Dorsolateral prefrontal cortex (tissue), 120 donors: ENCODE measurements at regions of chr11 and their contacts with region 1.

Region 1: DNA sequence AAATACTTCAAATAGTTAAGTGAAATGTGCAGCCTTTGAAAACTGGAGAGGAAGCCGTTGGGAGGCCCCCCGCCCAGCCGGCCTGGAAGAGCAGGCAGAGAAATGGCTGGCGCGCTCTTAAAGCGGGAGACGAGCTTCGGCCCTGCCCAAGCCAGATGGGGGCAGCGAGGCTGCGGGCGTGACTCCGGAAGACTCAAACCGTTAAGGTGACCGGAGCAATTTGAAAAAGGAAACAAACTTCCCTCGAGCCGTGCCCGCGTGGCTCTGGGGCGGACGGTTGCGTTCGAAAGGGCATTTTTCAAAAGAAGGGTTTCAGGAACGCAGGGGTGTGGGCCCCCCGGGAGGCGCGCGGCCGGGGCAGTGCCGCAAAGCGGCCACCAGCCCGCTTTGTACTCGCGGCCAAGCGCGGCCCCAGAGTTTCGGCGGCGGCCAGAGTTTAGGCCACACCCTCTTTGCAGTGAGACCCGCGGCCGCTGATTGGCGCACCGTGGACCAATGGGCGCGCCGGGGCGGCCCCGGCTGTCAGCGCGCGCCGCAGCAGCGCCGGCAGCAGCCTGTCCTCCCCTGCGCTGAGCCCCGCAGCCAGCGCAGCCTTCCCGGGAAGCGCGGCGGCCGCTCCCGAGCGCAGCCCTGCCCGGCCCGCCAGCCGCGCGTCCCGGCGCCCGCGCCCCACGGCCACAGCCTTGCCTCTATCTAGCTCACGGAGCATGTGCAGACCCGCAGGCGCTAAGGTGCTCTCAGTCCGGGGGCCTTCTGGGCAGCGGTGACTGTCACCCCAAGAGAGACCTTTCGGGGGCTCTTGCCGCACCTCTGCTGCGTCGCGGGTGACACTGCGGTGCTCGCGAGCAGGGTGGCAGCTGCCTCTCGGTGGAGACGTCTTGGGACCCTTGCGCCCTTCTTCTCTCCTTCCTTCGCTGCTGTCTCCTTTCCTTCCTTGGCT is at the start of gene NAV2:
- DNase-seq: peak; percentile 88 to 97 (median 94)
- H3K4me3 ChIP-seq: peak within 1 kb of the TSS; percentile 56 to 97 (median 83)
- H3K27ac ChIP-seq: peak within 1 kb of the TSS; percentile 61 to 98 (median 92)
- H3K27me3 ChIP-seq: no peaks in the 10 kb centered on the region
- CTCF ChIP-seq: peak in 41 of 56 donors; percentile 9 to 61 (median 35)
- total RNA-seq, gene NAV2: 43.9 to 157 (median 68.6) TPM

Region 2: DNA sequence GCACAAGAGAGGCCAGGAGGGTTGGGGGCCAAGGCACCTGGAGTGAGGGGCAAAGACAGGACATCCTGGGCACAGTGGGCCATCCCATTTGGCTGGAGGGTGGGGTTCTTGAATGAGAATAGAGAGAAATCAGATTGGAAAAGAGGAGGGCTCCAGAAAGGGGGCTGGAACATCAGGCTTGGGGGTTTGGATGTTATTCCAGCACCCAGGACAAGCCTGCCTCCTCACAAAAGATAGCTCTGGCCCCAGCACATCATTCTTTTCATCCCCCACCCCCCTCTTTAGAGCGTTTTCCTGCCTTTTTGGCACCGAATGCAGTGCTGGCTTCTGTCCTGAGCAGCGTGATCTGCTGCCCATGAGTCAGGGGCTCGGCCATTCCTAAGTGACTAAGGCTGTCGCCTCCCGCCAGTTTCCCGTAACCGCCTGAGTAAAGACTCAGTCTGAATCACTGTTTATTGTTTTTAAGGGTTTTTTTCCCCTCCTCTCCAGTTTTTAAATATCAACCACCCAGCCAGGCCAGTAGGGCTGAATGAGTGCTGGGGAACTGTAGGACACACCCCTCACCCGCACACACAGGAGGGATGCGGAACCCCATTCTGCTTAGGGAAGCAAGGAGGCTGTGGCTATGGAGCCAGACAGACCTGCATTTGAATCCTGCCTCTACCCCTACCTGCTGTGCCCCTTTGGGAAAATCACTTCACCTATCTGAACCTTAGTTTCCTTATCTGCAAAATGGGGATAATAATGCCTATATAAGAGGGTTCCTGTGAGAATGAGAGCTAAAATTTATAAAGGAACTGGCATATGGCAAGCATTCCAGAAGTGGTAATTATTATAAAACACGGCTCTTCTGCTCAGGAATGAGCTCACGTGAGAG is 32.4 kb before region 1 on chr11:
- intact Hi-C with region 1: loop called in 1 of 2 experiments (anchors 5 kb)
- DNase-seq: peak in 7 of 10 donors; percentile 42 to 86 (median 77)
- H3K4me3 ChIP-seq: peak overlapping the region in 31 of 59 donors; percentile 1 to 40 (median 24)
- H3K27ac ChIP-seq: peak overlapping the region in 38 of 59 donors; percentile 10 to 79 (median 56)
- H3K27me3 ChIP-seq: no peaks in the 10 kb centered on the region
- CTCF ChIP-seq: no peak

Region 3: DNA sequence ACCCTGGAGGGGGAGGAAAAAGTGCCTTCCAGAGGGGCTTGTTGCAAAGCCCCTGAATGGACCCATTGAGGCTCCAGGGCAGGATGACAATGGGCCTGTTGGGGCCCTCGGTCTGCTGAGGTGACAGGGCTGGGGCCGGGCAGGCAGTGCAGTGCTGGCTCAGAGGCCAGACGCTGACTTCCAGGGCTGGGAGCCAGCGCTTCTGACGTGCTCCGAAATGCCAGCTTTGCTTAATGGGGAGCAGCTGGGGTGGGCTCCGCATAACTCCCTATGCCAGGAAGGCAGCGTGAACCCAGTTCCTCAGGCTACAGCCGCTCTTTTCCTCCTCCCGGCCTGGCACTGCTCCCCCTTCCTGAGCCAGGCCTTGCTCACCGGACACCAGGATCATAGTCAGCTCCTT is 17.8 kb after region 1 on chr11:
- intact Hi-C with region 1: loop called in 1 of 2 experiments (anchors 2 kb)
- DNase-seq: peak; percentile 54 to 96 (median 74)
- H3K4me3 ChIP-seq: peak overlapping the region in 6 of 59 donors; percentile 3 to 40 (median 5)
- H3K27ac ChIP-seq: peak overlapping the region in 56 of 59 donors; percentile 2 to 94 (median 68)
- H3K27me3 ChIP-seq: no peaks in the 10 kb centered on the region
- CTCF ChIP-seq: no peak

Region 4: GRCh38 chr11:19766206-19766605 is 53.7 kb after region 1 on chr11:
- intact Hi-C with region 1: no loop called
- DNase-seq: no peak
- H3K4me3 ChIP-seq: no peak overlapping the region
- H3K27ac ChIP-seq: no peak overlapping the region
- H3K27me3 ChIP-seq: no peaks in the 10 kb centered on the region
- CTCF ChIP-seq: no peak

Region 5: DNA sequence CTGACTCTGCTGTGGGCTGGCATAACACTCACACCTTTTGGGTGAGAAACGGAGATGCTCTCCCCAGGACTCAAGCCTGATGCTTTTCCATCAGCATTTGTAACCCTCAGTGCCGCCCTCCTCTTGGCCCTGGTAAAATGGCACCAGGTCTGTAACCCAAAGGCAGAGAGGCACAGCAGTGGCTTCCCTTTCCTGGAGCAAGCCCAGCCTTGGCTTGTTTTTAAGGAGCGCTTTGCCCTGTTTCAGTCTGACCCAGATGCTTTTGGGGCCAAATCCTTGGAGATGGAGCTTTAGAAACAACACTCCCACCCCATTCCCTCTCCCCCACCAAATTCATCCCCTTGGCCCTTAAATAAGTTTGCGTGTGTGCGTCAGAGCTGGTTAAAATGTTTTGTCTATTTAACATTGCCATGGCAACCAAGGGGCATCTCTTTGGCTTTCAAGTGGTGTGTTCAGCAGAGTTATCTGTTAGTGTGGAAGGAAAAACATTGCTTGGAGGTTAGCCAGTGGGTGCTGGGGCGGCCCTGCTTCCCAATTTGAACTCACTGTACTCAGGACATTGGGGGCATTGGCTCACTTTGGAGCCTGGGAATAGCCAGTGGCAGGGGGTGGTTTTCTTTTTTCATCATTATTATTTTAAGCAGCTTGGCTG is 134.2 kb after region 1 on chr11:
- intact Hi-C with region 1: no loop called
- DNase-seq: peak in 2 of 10 donors; percentile 38 to 56
- H3K4me3 ChIP-seq: no peak overlapping the region
- H3K27ac ChIP-seq: peak overlapping the region in 17 of 59 donors; percentile 0 to 58 (median 18)
- H3K27me3 ChIP-seq: no peaks in the 10 kb centered on the region
- CTCF ChIP-seq: no peak